ENCODE measurements at regions of chr11 and their contacts with region 1.

Region 1: GRCh38 chr11:130861902-130862860 is 54.1 kb downstream of the SNX19 start:
- DNase-seq: peak; percentile 36 to 90
- ATAC-seq: peak; percentile 81 to 95
- H3K4me3 ChIP-seq: no peak overlapping the region
- H3K27ac ChIP-seq: peak overlapping the region; percentile 30 to 70; a peak in 5 of 6 replicates
- H3K4me1 ChIP-seq: 0 out of 3 replicates have a peak, but pooled peaks cover 2% of the 10 kb centered on the region
- CTCF ChIP-seq: peak; percentile 100
- EP300 ChIP-seq: no peak
- POLR2A ChIP-seq: no peak
- RAD21 ChIP-seq: peak; percentile 100

Region 2: DNA sequence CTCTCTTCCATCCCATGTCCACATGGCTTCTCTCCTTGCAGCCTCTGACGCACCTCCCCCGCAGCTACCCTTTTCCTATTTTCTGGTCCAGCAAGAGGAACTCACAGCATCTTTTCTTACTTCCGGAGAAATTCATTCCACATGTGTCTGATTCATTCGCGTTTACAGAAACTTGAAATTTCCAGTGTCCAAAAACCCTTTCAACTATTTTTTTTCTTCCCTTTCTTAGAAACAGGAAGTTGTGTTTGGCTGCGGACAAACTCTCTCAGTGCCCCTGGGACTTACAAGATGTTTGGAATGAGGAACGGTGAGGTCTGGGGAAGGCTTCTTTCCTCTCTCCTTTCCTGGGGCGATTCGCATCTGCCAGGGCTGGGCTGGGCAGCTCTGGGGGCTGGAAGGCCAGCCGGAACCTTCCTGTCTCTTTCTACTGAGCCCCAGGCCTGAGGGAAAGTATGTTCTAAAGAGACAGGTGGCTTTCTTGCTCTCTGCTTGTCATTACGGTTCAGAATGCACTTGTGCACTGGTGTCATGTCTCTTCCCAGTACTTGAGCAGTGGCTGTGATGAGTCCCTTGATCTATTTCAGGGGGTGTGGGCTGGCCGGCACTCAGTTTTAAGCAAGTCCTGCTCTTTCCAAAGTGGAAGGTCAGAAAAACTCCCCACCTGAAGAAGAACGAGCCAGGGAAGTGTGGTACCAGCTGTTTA is 461.2 kb before region 1 on chr11:
- CTCF ChIA-PET with region 1: interaction called, 10 read pairs
- POLR2A ChIA-PET with region 1: no interaction called
- DNase-seq: no peak
- ATAC-seq: no peak
- H3K4me3 ChIP-seq: no peak overlapping the region
- H3K27ac ChIP-seq: no peak overlapping the region
- H3K4me1 ChIP-seq: no peaks in the 10 kb centered on the region
- CTCF ChIP-seq: no peak
- EP300 ChIP-seq: no peak
- POLR2A ChIP-seq: no peak
- RAD21 ChIP-seq: no peak

Region 3: GRCh38 chr11:130636722-130637517 is 225.3 kb before region 1 on chr11:
- CTCF ChIA-PET with region 1: interaction called, 27 read pairs
- POLR2A ChIA-PET with region 1: no interaction called
- DNase-seq: peak; percentile 70 to 95
- ATAC-seq: peak; percentile 88 to 92
- H3K4me3 ChIP-seq: no peak overlapping the region
- H3K27ac ChIP-seq: peak overlapping the region; percentile 96 to 97
- H3K4me1 ChIP-seq: peaks cover 58% of the 10 kb centered on the region
- CTCF ChIP-seq: no peak
- EP300 ChIP-seq: peak; percentile 77 to 81; a peak in 4 of 5 replicates
- POLR2A ChIP-seq: no peak
- RAD21 ChIP-seq: peak; percentile 8 to 51; a peak in 3 of 5 replicates

Region 4: DNA sequence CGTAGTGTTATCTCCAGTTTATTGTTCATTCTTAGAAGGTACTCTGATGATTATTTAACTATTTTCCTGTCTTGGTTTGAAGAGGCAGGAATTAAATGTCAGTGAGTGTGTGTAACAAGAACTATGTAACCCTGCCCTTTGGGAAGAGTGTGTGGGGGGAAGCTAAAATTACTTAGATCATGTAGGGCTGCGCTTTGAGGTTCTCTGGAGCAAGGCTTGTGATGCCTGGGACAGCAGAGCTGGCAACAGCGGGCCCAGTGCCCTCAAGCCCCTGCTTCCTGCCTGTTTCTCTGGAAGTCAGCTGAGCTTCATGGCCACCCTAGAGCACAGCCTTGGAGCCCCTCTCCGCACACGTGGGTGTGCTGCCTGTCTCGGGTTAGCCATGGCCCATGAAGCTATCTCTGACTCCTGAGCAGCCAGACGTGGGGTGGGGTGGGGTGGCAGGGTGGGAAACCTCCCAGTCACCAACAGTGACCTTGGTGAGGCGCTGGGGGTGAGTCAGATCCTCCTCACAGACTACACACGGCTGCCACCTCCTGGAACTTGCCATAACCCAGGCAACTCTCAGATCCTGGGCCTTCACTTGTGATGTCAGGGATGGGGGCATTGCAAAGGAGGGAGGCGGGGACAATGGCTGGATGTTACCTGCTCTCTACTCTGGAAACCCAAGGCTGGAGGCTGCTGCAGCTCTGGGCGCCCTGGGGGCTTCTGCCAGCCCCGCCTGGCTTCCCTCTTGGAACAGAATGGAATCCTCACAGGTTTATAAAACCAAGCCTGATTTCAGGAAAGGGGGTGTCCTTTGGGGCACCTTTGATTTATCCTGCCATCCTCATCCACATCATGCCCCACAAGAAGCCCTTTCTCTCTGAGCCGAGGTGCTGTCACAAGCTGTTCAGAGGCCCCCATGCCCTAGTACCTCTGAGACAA is 34.5 kb before region 1 on chr11:
- CTCF ChIA-PET with region 1: interaction called, 100 read pairs
- POLR2A ChIA-PET with region 1: no interaction called
- DNase-seq: peak; percentile 69 to 80
- ATAC-seq: peak; percentile 98 to 99
- H3K4me3 ChIP-seq: no peak overlapping the region
- H3K27ac ChIP-seq: peak overlapping the region; percentile 74 to 91
- H3K4me1 ChIP-seq: peaks cover 13% of the 10 kb centered on the region
- CTCF ChIP-seq: peak; percentile 62
- EP300 ChIP-seq: no peak
- POLR2A ChIP-seq: no peak
- RAD21 ChIP-seq: peak; percentile 89 to 93

Region 5: GRCh38 chr11:130847517-130847916 is 14.7 kb before region 1 on chr11:
- CTCF ChIA-PET with region 1: interaction called, 30 read pairs
- POLR2A ChIA-PET with region 1: no interaction called
- DNase-seq: peak; percentile 58 to 75
- ATAC-seq: peak; percentile 97
- H3K4me3 ChIP-seq: no peak overlapping the region
- H3K27ac ChIP-seq: peak overlapping the region; percentile 57 to 86
- H3K4me1 ChIP-seq: peaks cover 7% of the 10 kb centered on the region; the same call in 2 of the 3 replicates
- CTCF ChIP-seq: no peak
- EP300 ChIP-seq: no peak; a peak in 1 of 5 replicates
- POLR2A ChIP-seq: no peak
- RAD21 ChIP-seq: no peak

Region 6: DNA sequence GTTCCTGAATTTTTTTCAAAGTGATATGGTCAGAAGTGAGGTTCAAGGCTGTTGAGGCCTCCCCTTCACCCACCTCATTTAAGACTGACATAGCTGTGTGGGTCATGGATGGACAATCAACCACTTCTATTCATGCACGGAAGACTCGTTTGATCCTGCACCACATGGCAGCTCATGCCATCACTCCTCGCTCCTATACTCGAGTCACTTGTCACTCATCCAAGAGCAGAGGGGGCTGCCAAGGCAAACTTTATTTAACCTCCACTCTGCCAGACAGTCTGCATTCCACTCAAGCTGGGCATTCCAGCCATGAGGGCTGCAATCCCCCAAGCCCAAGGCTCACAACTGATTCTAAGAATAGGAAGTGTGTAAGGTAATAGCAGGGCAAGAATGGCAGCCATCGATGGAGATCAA is 20.0 kb after region 1 on chr11:
- CTCF ChIA-PET with region 1: interaction called, 43 read pairs
- POLR2A ChIA-PET with region 1: no interaction called
- DNase-seq: no peak
- ATAC-seq: no peak
- H3K4me3 ChIP-seq: no peak overlapping the region
- H3K27ac ChIP-seq: no peak overlapping the region
- H3K4me1 ChIP-seq: no peaks in the 10 kb centered on the region
- CTCF ChIP-seq: no peak
- EP300 ChIP-seq: no peak
- POLR2A ChIP-seq: no peak
- RAD21 ChIP-seq: no peak

Region 7: GRCh38 chr11:130904380-130904779 is 42.2 kb after region 1 on chr11:
- CTCF ChIA-PET with region 1: interaction called, 11 read pairs
- POLR2A ChIA-PET with region 1: no interaction called
- DNase-seq: no peak
- ATAC-seq: peak; percentile 61 to 64; a peak in 2 of 6 replicates
- H3K4me3 ChIP-seq: no peak overlapping the region
- H3K27ac ChIP-seq: no peak overlapping the region
- H3K4me1 ChIP-seq: 0 out of 3 replicates have a peak, but pooled peaks cover 2% of the 10 kb centered on the region
- CTCF ChIP-seq: peak; percentile 18; the same call in 1 of the 3 replicates
- EP300 ChIP-seq: no peak
- POLR2A ChIP-seq: no peak
- RAD21 ChIP-seq: no peak